B cell (primary cell): ENCODE measurements at regions of chr4 and their contacts with region 1.

Region 1: GRCh38 chr4:113673450-113673849 is 88.1 kb downstream of the CAMK2D start:
- DNase-seq: peak; percentile 33
- ATAC-seq: peak; percentile 82
- H3K4me3 ChIP-seq: no peak overlapping the region
- H3K4me3 Mint-ChIP-seq: no peak overlapping the region
- H3K27ac ChIP-seq: no peak overlapping the region
- H3K27ac Mint-ChIP-seq: peak overlapping the region; percentile 63
- H3K4me1 ChIP-seq: peaks cover 34 to 42% of the 10 kb centered on the region in 2 donors
- H3K4me1 Mint-ChIP-seq: peaks cover 55% of the 10 kb centered on the region
- H3K27me3 ChIP-seq: no peaks in the 10 kb centered on the region
- H3K27me3 Mint-ChIP-seq: no peaks in the 10 kb centered on the region
- CTCF ChIP-seq: no peak

Region 2: GRCh38 chr4:113524096-113524495 is 149.4 kb before region 1 on chr4:
- CTCF ChIA-PET with region 1: no interaction called
- POLR2A ChIA-PET with region 1: no interaction called
- intact Hi-C with region 1: no loop called
- DNase-seq: no peak
- ATAC-seq: no peak
- H3K4me3 ChIP-seq: no peak overlapping the region
- H3K4me3 Mint-ChIP-seq: no peak overlapping the region
- H3K27ac ChIP-seq: no peak overlapping the region
- H3K27ac Mint-ChIP-seq: peak overlapping the region; percentile 68
- H3K4me1 ChIP-seq: no peaks in the 10 kb centered on the region
- H3K4me1 Mint-ChIP-seq: peaks cover 6% of the 10 kb centered on the region
- H3K27me3 ChIP-seq: no peaks in the 10 kb centered on the region
- H3K27me3 Mint-ChIP-seq: no peaks in the 10 kb centered on the region
- CTCF ChIP-seq: no peak

Region 3: GRCh38 chr4:113657586-113658233 is 15.7 kb before region 1 on chr4:
- CTCF ChIA-PET with region 1: no interaction called
- POLR2A ChIA-PET with region 1: no interaction called
- intact Hi-C with region 1: loop called (anchors 2 kb)
- DNase-seq: no peak
- ATAC-seq: no peak
- H3K4me3 ChIP-seq: no peak overlapping the region
- H3K4me3 Mint-ChIP-seq: no peak overlapping the region
- H3K27ac ChIP-seq: no peak overlapping the region
- H3K27ac Mint-ChIP-seq: no peak overlapping the region
- H3K4me1 ChIP-seq: peaks cover 7 to 22% of the 10 kb centered on the region in 2 donors
- H3K4me1 Mint-ChIP-seq: peaks cover 50% of the 10 kb centered on the region
- H3K27me3 ChIP-seq: no peaks in the 10 kb centered on the region
- H3K27me3 Mint-ChIP-seq: no peaks in the 10 kb centered on the region
- CTCF ChIP-seq: no peak

Region 4: DNA sequence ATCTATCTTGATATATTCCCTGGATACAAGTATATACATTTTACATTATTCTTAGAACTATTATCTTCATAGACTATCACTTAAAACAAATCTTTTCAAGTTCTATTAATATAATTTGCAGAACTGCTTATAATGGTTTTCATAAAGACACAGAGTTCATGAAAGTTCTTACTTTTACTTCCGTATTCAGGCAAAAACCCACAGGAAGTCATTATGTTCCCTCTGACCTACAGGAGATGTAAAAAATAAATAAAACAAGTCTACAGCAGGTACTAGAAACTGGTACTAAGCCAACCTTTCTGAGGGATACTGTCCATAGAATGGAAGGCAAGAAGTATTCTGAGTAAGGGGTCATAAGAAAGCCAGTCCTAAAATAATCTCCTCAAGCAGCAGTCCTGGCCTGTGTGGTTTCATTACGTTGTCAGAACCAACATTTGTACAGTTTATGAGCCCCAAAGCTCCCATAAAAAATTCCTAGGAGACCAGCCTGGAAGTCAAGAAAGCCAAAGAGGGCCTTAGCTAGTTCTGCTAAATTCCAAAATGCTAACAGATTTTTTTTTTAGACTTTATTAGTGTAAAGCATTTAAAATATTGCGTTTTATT is 19.5 kb after region 1 on chr4:
- CTCF ChIA-PET with region 1: interaction called, 4 read pairs
- POLR2A ChIA-PET with region 1: interaction called, 3 read pairs
- intact Hi-C with region 1: loop called (anchors 2 kb)
- DNase-seq: peak; percentile 63
- ATAC-seq: peak; percentile 84
- H3K4me3 ChIP-seq: peak overlapping the region in 1 of 5 experiments; percentile 44
- H3K4me3 Mint-ChIP-seq: peak overlapping the region; percentile 65
- H3K27ac ChIP-seq: peak overlapping the region; percentile 42 to 80
- H3K27ac Mint-ChIP-seq: peak overlapping the region; percentile 86
- H3K4me1 ChIP-seq: peaks cover 24 to 54% of the 10 kb centered on the region in 2 donors
- H3K4me1 Mint-ChIP-seq: peaks cover 50% of the 10 kb centered on the region
- H3K27me3 ChIP-seq: no peaks in the 10 kb centered on the region
- H3K27me3 Mint-ChIP-seq: no peaks in the 10 kb centered on the region
- CTCF ChIP-seq: no peak